Heart left ventricle (tissue), 16 donors: ENCODE measurements at regions of chr3 and their contacts with region 1.

Region 1: DNA sequence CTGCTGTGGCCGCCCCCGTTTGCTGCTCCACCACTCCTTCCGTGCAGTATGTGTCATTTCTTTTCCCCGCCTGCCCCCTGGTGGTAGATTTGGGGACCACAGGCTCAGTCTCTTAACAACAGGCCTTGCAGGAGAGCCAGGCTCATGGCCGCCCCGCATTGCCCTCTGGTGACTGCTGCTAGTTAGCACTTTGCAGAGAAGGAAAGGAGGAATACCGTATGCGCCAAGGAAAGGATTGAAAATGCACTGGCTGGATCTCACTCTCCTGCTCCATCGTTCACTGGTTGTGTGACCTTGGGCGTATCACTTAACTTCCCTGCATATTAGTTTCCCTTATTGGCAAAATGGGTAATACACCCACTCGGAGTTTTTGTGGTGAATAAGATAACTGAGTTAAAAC is 39.3 kb upstream of the PXYLP1 start:
- DNase-seq: peak; percentile 92 to 97 (median 94)
- ATAC-seq: peak; percentile 92 to 99 (median 99)
- H3K4me3 ChIP-seq: no peak overlapping the region
- H3K27ac ChIP-seq: no peak overlapping the region
- H3K4me1 ChIP-seq: peaks cover 0 to 2% (median 0%) of the 10 kb centered on the region in 12 donors
- H3K27me3 ChIP-seq: peaks cover 0 to 5% (median 0%) of the 10 kb centered on the region in 9 donors
- CTCF ChIP-seq: peak; percentile 96 to 100 (median 98)
- POLR2A ChIP-seq: no peak

Region 2: GRCh38 chr3:140898340-140899180 is 293.8 kb before region 1 on chr3:
- intact Hi-C with region 1: loop called in 8 of 10 experiments (anchors 5 to 10 kb)
- DNase-seq: no peak
- ATAC-seq: peak; percentile 23 to 53 (median 36)
- H3K4me3 ChIP-seq: no peak overlapping the region
- H3K27ac ChIP-seq: no peak overlapping the region
- H3K4me1 ChIP-seq: peaks cover 0 to 5% (median 0%) of the 10 kb centered on the region in 12 donors
- H3K27me3 ChIP-seq: no peaks in the 10 kb centered on the region
- CTCF ChIP-seq: peak; percentile 33 to 63 (median 48)
- POLR2A ChIP-seq: no peak

Region 3: GRCh38 chr3:141000027-141000663 is 192.2 kb before region 1 on chr3:
- intact Hi-C with region 1: loop called (anchors 1 to 5 kb)
- DNase-seq: peak; percentile 58 to 77 (median 68)
- ATAC-seq: peak; percentile 93 to 99 (median 96)
- H3K4me3 ChIP-seq: no peak overlapping the region
- H3K27ac ChIP-seq: no peak overlapping the region
- H3K4me1 ChIP-seq: no peaks in the 10 kb centered on the region
- H3K27me3 ChIP-seq: no peaks in the 10 kb centered on the region
- CTCF ChIP-seq: peak; percentile 59 to 83 (median 76)
- POLR2A ChIP-seq: no peak

Region 4: GRCh38 chr3:141011232-141011996 is 180.9 kb before region 1 on chr3:
- intact Hi-C with region 1: loop called in 4 of 10 experiments (anchors 1 to 5 kb)
- DNase-seq: peak; percentile 76 to 89 (median 82)
- ATAC-seq: peak; percentile 62 to 84 (median 76)
- H3K4me3 ChIP-seq: no peak overlapping the region
- H3K27ac ChIP-seq: no peak overlapping the region
- H3K4me1 ChIP-seq: peaks cover 0 to 6% (median 1%) of the 10 kb centered on the region in 12 donors
- H3K27me3 ChIP-seq: no peaks in the 10 kb centered on the region
- CTCF ChIP-seq: peak; percentile 57 to 87 (median 80)
- POLR2A ChIP-seq: no peak

Region 5: GRCh38 chr3:141050576-141051442 is 141.5 kb before region 1 on chr3 and contains the start of gene SPSB4:
- intact Hi-C with region 1: loop called in 1 of 10 experiments (anchors 2 kb)
- DNase-seq: peak; percentile 75 to 88 (median 79)
- ATAC-seq: peak; percentile 77 to 92 (median 90)
- H3K4me3 ChIP-seq: peak within 1 kb of the TSS; percentile 52 to 72 (median 58)
- H3K27ac ChIP-seq: peak within 1 kb of the TSS; percentile 30 to 85 (median 72)
- H3K4me1 ChIP-seq: peaks cover 0 to 34% (median 8%) of the 10 kb centered on the region in 12 donors
- H3K27me3 ChIP-seq: peaks cover 0 to 45% (median 0%) of the 10 kb centered on the region in 9 donors
- CTCF ChIP-seq: peak; percentile 16 to 64 (median 46)
- POLR2A ChIP-seq: no peak
- total RNA-seq, gene SPSB4: 3.7 to 11.1 (median 4.8) TPM

Region 6: DNA sequence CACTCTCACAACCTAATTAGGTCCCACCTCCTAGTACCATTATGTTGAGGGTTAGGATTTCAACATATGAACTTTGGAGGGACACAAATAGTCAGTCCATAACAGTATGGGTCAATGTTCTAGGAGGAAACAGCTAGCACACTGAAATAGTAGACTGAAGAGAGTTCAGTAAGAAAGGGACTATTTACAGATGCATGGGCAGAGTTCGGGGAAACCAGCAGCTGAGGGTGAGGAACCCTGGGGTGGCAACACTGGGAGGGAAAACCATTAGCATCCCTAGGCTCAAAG is 38.7 kb before region 1 on chr3:
- intact Hi-C with region 1: no loop called
- DNase-seq: no peak
- ATAC-seq: no peak
- H3K4me3 ChIP-seq: no peak overlapping the region
- H3K27ac ChIP-seq: peak overlapping the region in 1 of 12 donors; percentile 19
- H3K4me1 ChIP-seq: peaks cover 0 to 12% (median 0%) of the 10 kb centered on the region in 12 donors
- H3K27me3 ChIP-seq: no peaks in the 10 kb centered on the region
- CTCF ChIP-seq: no peak
- POLR2A ChIP-seq: no peak

Region 7: GRCh38 chr3:141164852-141165251 is 27.5 kb before region 1 on chr3:
- intact Hi-C with region 1: no loop called
- DNase-seq: no peak
- ATAC-seq: peak in 2 of 4 donors; percentile 32 to 34
- H3K4me3 ChIP-seq: no peak overlapping the region
- H3K27ac ChIP-seq: peak overlapping the region in 2 of 12 donors; percentile 9 to 37
- H3K4me1 ChIP-seq: no peaks in the 10 kb centered on the region
- H3K27me3 ChIP-seq: no peaks in the 10 kb centered on the region
- CTCF ChIP-seq: no peak
- POLR2A ChIP-seq: no peak

Region 8: DNA sequence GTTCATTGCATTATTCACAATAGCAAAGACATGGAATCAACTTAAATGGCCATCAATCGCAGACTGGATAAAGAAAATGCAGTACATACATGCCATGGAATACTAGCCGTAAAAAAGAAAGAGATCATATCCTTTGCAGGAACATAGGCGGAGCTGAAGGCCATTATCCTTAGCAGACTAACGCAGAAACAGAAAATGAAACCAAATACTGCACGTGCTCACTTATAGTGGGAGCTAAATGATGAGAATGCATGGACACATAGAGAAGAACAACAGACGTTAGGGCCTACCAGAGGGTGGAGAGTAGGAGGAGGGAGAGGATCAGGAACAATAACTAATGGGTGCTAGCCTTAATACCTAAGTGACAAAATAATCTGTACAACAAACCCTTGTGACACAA is 352.4 kb after region 1 on chr3:
- intact Hi-C with region 1: no loop called
- DNase-seq: no peak
- ATAC-seq: peak in 2 of 4 donors; percentile 49 to 71
- H3K4me3 ChIP-seq: no peak overlapping the region
- H3K27ac ChIP-seq: peak overlapping the region in 1 of 12 donors; percentile 50
- H3K4me1 ChIP-seq: peaks cover 0 to 17% (median 0%) of the 10 kb centered on the region in 12 donors
- H3K27me3 ChIP-seq: no peaks in the 10 kb centered on the region
- CTCF ChIP-seq: no peak
- POLR2A ChIP-seq: no peak